ENCODE measurements at regions of chr5 and their contacts with region 1.

Region 1: GRCh38 chr5:164504141-164504772 is 998.8 kb downstream of the MAT2B start:
- DNase-seq: peak; percentile 69
- ATAC-seq: peak; percentile 89
- H3K4me3 ChIP-seq: no peak overlapping the region
- H3K27ac ChIP-seq: no peak overlapping the region
- H3K4me1 ChIP-seq: no peaks in the 10 kb centered on the region
- H3K27me3 ChIP-seq: no peaks in the 10 kb centered on the region
- CTCF ChIP-seq: peak; percentile 93
- POLR2A ChIP-seq: no peak
- RAD21 ChIP-seq: peak; percentile 94

Region 2: DNA sequence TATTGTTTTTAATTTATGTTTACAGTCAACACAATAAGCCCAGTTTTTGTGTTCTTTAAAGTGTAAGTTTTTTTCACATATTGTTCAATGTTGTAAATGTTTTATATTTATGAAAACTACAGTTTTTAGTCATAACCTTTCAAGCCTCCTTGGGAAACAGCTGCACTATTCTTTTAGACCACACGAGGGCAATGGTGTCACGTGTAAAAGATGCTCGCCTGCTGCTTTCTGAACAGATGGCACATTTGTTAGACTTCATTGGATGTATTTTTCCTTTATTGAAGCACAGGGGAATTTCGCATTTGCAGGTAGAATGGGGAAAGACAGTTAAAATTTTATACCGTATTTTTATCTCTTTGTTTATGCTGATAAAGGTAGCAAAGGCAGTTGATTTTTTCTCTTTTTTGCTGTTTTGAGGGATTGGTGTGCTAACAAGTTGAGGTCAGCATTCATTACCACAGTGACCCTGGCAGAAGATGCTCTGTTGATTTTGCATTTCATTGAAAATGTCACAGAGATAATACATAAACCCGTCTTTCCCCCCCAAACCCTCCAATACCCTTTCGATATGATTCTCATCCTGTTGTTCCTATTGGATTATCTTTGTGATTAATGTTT is 939.8 kb before region 1 on chr5:
- CTCF ChIA-PET with region 1: interaction called, 14 read pairs
- POLR2A ChIA-PET with region 1: no interaction called
- dilution Hi-C with region 1: no loop called
- in situ Hi-C with region 1: loop called (anchors 5 kb)
- intact Hi-C with region 1: loop called (anchors 1 kb)
- DNase-seq: peak; percentile 69
- ATAC-seq: peak; percentile 68
- H3K4me3 ChIP-seq: no peak overlapping the region
- H3K27ac ChIP-seq: no peak overlapping the region
- H3K4me1 ChIP-seq: peaks cover 5% of the 10 kb centered on the region
- H3K27me3 ChIP-seq: no peaks in the 10 kb centered on the region
- CTCF ChIP-seq: peak; percentile 89
- POLR2A ChIP-seq: no peak
- RAD21 ChIP-seq: peak; percentile 91

Region 3: DNA sequence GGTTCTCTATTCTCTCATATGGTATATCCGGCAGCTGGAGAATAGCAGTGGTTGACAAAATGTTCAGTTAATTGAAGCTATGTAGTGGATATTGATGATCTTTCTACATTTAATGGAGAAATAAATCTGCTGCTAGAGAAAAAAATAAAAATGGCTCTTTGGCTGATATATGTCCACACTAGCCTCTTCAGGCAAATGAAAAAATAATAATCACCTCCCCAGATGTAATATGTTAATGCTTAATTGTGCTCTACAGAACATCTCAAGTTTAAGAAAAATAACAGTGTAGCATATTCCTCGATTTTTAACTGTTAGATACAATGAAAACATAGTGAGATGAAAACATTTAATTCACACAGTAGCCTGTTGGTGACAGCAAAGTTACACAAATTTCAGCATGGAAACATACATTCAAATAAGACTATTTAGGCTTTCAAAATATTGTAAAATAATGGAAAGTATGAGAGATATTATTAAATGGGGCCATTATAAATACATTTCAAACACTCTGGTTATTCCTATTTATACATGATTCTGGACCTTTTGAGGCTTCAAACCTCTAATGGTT is 455.8 kb before region 1 on chr5:
- CTCF ChIA-PET with region 1: no interaction called
- POLR2A ChIA-PET with region 1: no interaction called
- dilution Hi-C with region 1: no loop called
- in situ Hi-C with region 1: no loop called
- intact Hi-C with region 1: loop called (anchors 1 kb)
- DNase-seq: peak; percentile 44
- ATAC-seq: no peak
- H3K4me3 ChIP-seq: no peak overlapping the region
- H3K27ac ChIP-seq: no peak overlapping the region
- H3K4me1 ChIP-seq: no peaks in the 10 kb centered on the region
- H3K27me3 ChIP-seq: no peaks in the 10 kb centered on the region
- CTCF ChIP-seq: peak; percentile 54
- POLR2A ChIP-seq: no peak
- RAD21 ChIP-seq: peak; percentile 58

Region 4: GRCh38 chr5:164302533-164303235 is 201.6 kb before region 1 on chr5:
- CTCF ChIA-PET with region 1: no interaction called
- POLR2A ChIA-PET with region 1: no interaction called
- dilution Hi-C with region 1: no loop called
- in situ Hi-C with region 1: no loop called
- intact Hi-C with region 1: no loop called
- DNase-seq: peak; percentile 42
- ATAC-seq: no peak; the same call in 1 of the 2 replicates
- H3K4me3 ChIP-seq: no peak overlapping the region
- H3K27ac ChIP-seq: no peak overlapping the region
- H3K4me1 ChIP-seq: no peaks in the 10 kb centered on the region
- H3K27me3 ChIP-seq: no peaks in the 10 kb centered on the region
- CTCF ChIP-seq: no peak
- POLR2A ChIP-seq: no peak
- RAD21 ChIP-seq: no peak

Region 5: GRCh38 chr5:164672931-164673694 is 168.9 kb after region 1 on chr5:
- CTCF ChIA-PET with region 1: no interaction called
- POLR2A ChIA-PET with region 1: no interaction called
- dilution Hi-C with region 1: no loop called
- in situ Hi-C with region 1: no loop called
- intact Hi-C with region 1: loop called (anchors 2 kb)
- DNase-seq: peak; percentile 17
- ATAC-seq: peak; percentile 69
- H3K4me3 ChIP-seq: no peak overlapping the region
- H3K27ac ChIP-seq: no peak overlapping the region
- H3K4me1 ChIP-seq: 0 out of 2 replicates have a peak, but pooled peaks cover 2% of the 10 kb centered on the region
- H3K27me3 ChIP-seq: no peaks in the 10 kb centered on the region
- CTCF ChIP-seq: peak; percentile 28
- POLR2A ChIP-seq: no peak
- RAD21 ChIP-seq: peak; percentile 16; the same call in 1 of the 2 replicates

Region 6: GRCh38 chr5:165209086-165209727 is 705.0 kb after region 1 on chr5:
- CTCF ChIA-PET with region 1: no interaction called
- POLR2A ChIA-PET with region 1: no interaction called
- dilution Hi-C with region 1: no loop called
- in situ Hi-C with region 1: no loop called
- intact Hi-C with region 1: loop called (anchors 2 kb)
- DNase-seq: peak; percentile 37
- ATAC-seq: no peak
- H3K4me3 ChIP-seq: no peak overlapping the region
- H3K27ac ChIP-seq: no peak overlapping the region
- H3K4me1 ChIP-seq: no peaks in the 10 kb centered on the region
- H3K27me3 ChIP-seq: no peaks in the 10 kb centered on the region
- CTCF ChIP-seq: peak; percentile 61
- POLR2A ChIP-seq: no peak
- RAD21 ChIP-seq: peak; percentile 37

Region 7: DNA sequence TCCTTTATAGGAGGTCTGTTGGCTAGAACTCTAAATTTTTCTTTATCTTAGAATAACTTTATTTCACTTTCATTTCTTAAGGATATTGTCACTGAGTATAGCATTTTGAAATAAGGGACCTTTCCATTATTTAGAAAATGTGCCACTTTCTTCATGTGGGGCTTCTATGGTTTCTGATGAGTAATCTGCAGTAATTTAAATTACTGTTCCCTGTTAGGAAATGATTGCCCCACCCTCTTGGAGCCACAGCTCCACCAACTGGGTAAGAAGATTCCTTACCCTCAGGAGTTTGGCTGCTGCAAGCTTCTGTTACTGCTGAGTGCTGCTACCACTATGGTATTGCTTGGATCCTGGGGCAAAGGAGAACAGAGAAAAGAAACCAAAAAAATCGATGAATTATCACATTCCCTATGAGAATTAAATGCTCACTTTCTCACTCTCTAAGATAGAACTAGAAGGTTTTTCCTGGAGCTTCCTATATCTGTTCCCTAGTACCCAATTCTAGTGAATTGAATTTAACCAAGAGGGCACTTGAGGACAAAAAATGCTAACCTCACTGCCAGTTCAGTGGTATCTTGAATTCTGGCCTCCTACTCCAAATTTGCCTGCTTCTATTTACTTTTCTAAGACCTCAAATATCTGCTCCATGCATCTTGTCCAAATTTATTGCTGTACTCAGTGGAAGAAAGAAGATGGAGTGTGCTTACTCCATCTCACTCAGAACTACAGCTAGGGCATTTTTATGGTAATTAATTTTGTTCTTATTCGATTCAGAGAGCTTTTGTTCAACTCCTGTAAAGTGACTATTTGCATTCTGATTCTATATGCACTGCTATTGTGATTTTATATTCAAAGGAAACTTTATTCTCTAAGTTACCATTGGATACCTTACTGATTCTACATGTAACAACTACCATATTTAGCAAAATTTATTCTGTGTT is 1112.5 kb after region 1 on chr5:
- CTCF ChIA-PET with region 1: no interaction called
- POLR2A ChIA-PET with region 1: no interaction called
- dilution Hi-C with region 1: no loop called
- in situ Hi-C with region 1: no loop called
- intact Hi-C with region 1: loop called (anchors 2 kb)
- DNase-seq: peak; percentile 62
- ATAC-seq: peak; percentile 90
- H3K4me3 ChIP-seq: no peak overlapping the region
- H3K27ac ChIP-seq: no peak overlapping the region
- H3K4me1 ChIP-seq: peaks cover 2% of the 10 kb centered on the region; the same call in 1 of the 2 replicates
- H3K27me3 ChIP-seq: no peaks in the 10 kb centered on the region
- CTCF ChIP-seq: peak; percentile 43
- POLR2A ChIP-seq: no peak
- RAD21 ChIP-seq: peak; percentile 35; the same call in 1 of the 2 replicates